ENCODE measurements at regions of chr7 and their contacts with region 1.

Region 1: GRCh38 chr7:142782922-142783900 is 12.4 kb downstream of the PRSS2 start:
- DNase-seq: peak; percentile 90
- H3K4me3 ChIP-seq: peak overlapping the region; percentile 38 to 52
- H3K27ac ChIP-seq: no peak overlapping the region
- H3K4me1 ChIP-seq: no peaks in the 10 kb centered on the region; a peak in 1 of 4 replicates
- H3K27me3 ChIP-seq: 0 out of 2 replicates have a peak, but pooled peaks cover 3% of the 10 kb centered on the region
- CTCF ChIP-seq: peak; percentile 99
- EP300 ChIP-seq: peak in 1 of 2 experiments; percentile 40; a peak in 1 of 4 replicates
- RAD21 ChIP-seq: peak; percentile 100

Region 2: DNA sequence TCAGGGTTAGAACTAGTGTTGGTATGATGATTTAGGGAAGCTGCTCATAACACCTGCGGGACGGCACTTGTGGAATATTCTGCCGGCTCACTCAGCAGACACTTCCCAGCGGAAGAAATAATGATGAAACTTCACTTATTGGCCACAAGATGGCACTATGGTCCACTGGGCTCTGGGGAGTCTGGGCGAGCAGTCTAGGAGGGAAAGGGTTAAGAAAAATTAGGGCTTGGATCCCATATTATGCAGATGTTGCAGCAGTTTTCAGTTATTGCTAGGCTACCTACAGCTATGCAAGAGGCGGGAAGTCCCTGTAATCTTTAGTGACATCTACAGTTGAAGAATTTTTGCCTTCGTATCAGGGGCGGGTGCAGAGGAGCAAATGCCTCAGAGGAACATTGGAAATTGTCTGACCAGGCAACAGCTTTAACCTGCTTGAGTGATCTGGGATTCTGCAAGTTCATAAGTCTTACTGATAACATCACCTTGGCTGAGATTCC is 286.6 kb before region 1 on chr7:
- CTCF ChIA-PET with region 1: interaction called, 55 read pairs
- POLR2A ChIA-PET with region 1: no interaction called
- DNase-seq: peak; percentile 67
- H3K4me3 ChIP-seq: no peak overlapping the region
- H3K27ac ChIP-seq: no peak overlapping the region
- H3K4me1 ChIP-seq: peaks cover 0 to 3% of the 10 kb centered on the region in 2 experiments; a peak in 1 of 4 replicates
- H3K27me3 ChIP-seq: peaks cover 21% of the 10 kb centered on the region; the same call in 1 of the 2 replicates
- CTCF ChIP-seq: peak; percentile 95
- EP300 ChIP-seq: no peak
- RAD21 ChIP-seq: peak; percentile 69

Region 3: GRCh38 chr7:142587578-142588191 is 195.5 kb before region 1 on chr7:
- CTCF ChIA-PET with region 1: interaction called, 20 read pairs
- POLR2A ChIA-PET with region 1: no interaction called
- DNase-seq: peak; percentile 31
- H3K4me3 ChIP-seq: no peak overlapping the region; a peak in 1 of 4 replicates
- H3K27ac ChIP-seq: no peak overlapping the region
- H3K4me1 ChIP-seq: peaks cover 0 to 6% of the 10 kb centered on the region in 2 experiments; a peak in 3 of 4 replicates
- H3K27me3 ChIP-seq: no peaks in the 10 kb centered on the region
- CTCF ChIP-seq: peak; percentile 64
- EP300 ChIP-seq: no peak
- RAD21 ChIP-seq: peak; percentile 40; the same call in 1 of the 2 replicates

Region 4: DNA sequence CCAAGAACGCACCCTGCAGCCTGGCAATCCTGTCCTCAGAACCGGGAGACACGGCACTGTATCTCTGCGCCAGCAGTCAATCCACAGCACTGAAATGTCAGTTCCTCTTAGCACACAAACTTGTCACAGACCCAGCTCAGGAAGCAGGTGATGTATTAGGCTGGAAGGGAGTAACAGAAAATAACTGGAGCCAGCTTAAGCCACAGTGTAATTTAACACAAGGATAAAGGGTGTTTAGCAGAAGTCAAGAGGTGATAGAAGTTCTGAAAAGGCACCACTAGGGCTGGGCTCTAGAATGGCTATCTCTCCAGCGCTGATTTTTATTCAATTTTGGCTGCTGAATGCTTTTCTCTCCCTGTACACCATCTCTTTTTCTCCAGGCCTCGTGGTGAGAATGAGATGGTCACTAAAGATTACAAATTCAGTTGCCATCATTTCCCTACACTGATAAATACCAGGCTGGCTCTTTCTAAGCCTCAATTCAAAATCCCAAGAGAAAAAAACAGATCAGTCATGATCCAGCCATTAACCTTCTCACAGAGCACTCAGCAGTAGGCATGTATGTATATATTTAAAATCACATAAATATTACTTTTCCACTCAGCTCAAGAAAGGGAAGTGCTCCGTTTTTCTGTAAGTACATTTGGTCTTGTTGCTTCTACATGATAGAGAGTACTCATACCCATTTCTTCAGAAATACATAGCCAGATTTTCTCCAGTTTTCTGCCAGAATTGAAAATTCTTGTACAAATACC is 136.6 kb before region 1 on chr7:
- CTCF ChIA-PET with region 1: interaction called, 43 read pairs
- POLR2A ChIA-PET with region 1: no interaction called
- DNase-seq: peak; percentile 43
- H3K4me3 ChIP-seq: peak overlapping the region; percentile 2 to 24; a peak in 1 of 4 replicates
- H3K27ac ChIP-seq: peak overlapping the region in 1 of 2 experiments; percentile 98; a peak in 2 of 4 replicates
- H3K4me1 ChIP-seq: peaks cover 0 to 25% of the 10 kb centered on the region in 2 experiments; a peak in 2 of 4 replicates
- H3K27me3 ChIP-seq: peaks cover 15% of the 10 kb centered on the region; the same call in 1 of the 2 replicates
- CTCF ChIP-seq: no peak
- EP300 ChIP-seq: peak in 1 of 2 experiments; percentile 81; a peak in 2 of 4 replicates
- RAD21 ChIP-seq: no peak; the same call in none of the 2 replicates

Region 5: GRCh38 chr7:142711746-142712619 is 71.2 kb before region 1 on chr7:
- CTCF ChIA-PET with region 1: interaction called, 76 read pairs
- POLR2A ChIA-PET with region 1: no interaction called
- DNase-seq: peak; percentile 36
- H3K4me3 ChIP-seq: no peak overlapping the region
- H3K27ac ChIP-seq: no peak overlapping the region
- H3K4me1 ChIP-seq: no peaks in the 10 kb centered on the region; a peak in 1 of 4 replicates
- H3K27me3 ChIP-seq: peaks cover 6% of the 10 kb centered on the region; the same call in 1 of the 2 replicates
- CTCF ChIP-seq: peak; percentile 90
- EP300 ChIP-seq: no peak
- RAD21 ChIP-seq: peak; percentile 59

Region 6: DNA sequence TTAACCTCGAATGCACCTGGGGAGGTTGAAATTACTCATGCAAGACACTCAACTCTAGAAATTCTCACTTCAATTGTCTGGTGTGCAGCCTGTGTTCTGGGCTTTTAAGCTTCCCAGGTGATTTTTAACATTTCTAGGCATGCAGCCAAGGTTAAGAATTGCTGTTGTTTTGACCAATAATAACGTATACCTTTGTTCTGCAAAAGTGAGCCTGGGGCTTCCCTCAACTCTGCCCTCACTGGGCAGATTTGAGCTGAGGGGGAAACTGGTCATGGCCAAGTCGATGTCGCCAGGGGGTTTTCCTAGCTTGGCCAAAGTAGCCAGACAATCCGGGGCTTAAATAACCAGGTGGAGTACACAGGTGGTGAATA is 11.9 kb before region 1 on chr7:
- CTCF ChIA-PET with region 1: interaction called, 67 read pairs
- POLR2A ChIA-PET with region 1: no interaction called
- DNase-seq: no peak
- H3K4me3 ChIP-seq: no peak overlapping the region
- H3K27ac ChIP-seq: no peak overlapping the region
- H3K4me1 ChIP-seq: no peaks in the 10 kb centered on the region
- H3K27me3 ChIP-seq: peaks cover 41% of the 10 kb centered on the region
- CTCF ChIP-seq: no peak
- EP300 ChIP-seq: no peak
- RAD21 ChIP-seq: no peak

Region 7: DNA sequence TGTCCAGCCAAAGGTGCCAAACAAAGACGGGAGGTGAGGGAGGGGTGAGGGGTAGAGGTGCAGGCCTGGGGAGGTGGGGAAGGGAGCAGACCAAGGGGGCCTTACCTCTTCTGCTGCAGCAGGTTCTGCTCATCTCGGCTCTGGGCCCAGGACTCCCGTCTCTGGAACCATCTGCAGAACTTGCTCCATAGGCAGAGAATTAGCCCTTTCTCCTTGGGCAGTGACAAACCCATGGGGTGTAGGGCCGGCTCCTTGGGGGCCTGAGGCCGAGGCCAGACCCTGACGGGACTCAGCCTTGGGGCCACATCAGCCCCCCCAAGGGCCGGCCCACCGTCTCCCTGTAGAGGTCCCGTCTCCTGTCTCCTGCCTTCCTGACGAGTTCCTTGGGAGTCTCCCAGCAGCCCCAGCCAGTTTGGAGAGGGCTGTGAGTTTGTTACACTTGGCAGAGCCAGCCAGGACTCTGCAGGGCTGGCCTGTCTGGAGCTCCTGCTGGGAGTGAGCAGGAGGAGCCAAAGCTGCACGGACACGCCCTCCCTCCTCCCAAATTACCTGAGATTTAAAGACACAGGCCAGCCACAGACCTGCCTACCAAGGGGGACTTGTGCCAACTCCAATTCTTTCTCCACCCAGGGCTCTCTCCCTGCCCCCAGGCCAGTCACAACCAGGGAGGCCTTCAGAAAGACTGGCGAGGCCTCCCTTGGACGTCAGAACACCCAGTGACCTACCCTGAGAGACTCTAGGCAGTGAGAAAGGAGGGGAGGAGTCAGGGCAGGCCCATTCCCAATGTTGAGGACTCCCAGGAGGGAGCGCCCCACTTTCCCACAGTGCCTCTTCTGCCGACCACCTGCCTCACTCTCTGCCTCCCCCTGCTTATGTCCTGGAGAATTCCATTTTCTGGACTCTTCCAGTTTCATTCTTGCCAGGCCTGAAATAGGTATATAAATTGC is 102.3 kb after region 1 on chr7 and contains the start of gene TRPV6:
- CTCF ChIA-PET with region 1: no interaction called
- POLR2A ChIA-PET with region 1: no interaction called
- DNase-seq: no peak
- H3K4me3 ChIP-seq: no peak within 1 kb of the TSS
- H3K27ac ChIP-seq: no peak within 1 kb of the TSS
- H3K4me1 ChIP-seq: no peaks in the 10 kb centered on the region
- H3K27me3 ChIP-seq: peaks cover 44% of the 10 kb centered on the region
- CTCF ChIP-seq: no peak
- EP300 ChIP-seq: no peak
- RAD21 ChIP-seq: no peak
- polyA plus RNA-seq, gene TRPV6: not detected in 2 replicates

Measured in SK-N-SH (cell line).